ENCODE measurements at regions of chrX and their contacts with region 1.

Region 1: DNA sequence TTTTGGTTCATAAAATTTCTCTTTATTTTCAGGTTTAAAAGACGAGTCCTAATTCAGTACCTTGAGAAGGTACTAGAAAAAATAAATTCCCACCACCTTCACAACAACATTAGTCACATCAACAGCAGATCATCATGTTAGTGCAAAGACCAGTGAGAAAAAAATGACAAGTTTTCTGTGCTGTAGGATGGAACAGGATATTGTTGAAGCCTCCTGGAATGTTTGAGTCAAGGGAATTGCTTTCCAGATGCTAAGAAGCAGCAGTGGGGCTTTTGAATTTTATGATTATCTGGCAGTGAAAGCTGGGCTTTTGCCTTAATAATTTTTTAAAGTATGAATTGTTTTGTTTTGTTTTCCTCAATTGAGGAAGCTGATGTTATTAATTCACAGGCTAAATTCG is 61.0 kb downstream of the INTS6L start:
- DNase-seq: no peak

Region 2: DNA sequence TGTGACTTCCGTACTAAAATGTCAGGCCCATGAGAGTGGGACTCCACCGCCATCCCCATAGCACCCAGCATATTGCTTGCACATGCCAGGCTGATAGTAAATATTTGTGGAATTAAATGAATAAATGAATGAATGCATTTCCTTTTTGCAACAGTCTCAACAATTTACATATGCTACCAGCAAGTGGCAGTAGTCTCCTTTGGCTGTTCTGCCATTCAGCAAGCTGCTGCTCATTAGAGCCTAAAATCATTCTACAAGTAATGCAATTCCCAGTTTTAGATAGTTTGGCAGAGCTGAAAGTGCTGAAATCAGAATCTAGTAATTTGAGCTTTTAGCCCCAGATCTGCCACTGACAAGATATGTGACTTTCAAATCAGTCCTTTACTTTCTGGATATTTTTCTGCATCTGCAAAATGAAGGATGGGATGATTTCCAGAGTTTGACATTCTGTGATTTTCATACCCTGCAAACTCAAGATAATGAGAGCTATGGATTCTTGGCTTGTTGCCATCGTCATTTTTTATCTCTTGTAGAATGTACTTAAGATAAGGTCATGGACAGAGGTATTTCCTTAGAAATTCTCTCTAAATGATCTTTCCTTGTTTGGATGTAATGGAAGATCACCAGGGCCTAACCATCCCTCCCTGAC is 96.7 kb before region 1 on chrX:
- intact Hi-C with region 1: loop called in 1 of 2 experiments (anchors 10 kb)
- DNase-seq: no peak